Caco-2 (cell line): ENCODE measurements at regions of chr11 and their contacts with region 1.

Region 1: DNA sequence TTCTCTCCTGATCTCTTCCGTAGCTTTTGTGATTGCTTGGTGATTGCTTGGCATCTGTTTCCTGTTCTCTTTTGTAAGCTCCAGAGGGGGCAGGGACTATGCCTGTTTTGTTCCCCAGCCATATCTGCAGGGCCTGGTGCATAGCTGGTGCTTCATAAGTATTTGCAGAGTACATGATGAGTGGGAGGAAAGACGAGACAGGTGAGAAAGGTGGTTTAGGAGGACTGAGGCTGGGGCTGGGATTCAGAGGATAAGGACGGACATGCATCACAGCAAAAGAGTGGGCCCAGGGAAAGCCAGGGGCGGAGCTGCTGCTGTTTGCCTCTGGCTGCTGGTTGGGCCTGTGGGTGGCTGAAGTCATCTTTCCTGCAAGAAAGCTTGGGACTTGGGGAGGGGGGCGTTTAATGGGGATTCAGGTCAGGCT is 62.4 kb downstream of the DSCAML1 start:
- DNase-seq: no peak
- H3K4me3 ChIP-seq: no peak overlapping the region
- H3K4me3 Mint-ChIP-seq: no peak overlapping the region
- H3K27ac Mint-ChIP-seq: no peak overlapping the region
- H3K4me1 ChIP-seq: no peaks in the 10 kb centered on the region
- H3K4me1 Mint-ChIP-seq: peaks cover 4% of the 10 kb centered on the region
- H3K27me3 ChIP-seq: no peaks in the 10 kb centered on the region
- H3K27me3 Mint-ChIP-seq: no peaks in the 10 kb centered on the region
- CTCF ChIP-seq: no peak

Region 2: DNA sequence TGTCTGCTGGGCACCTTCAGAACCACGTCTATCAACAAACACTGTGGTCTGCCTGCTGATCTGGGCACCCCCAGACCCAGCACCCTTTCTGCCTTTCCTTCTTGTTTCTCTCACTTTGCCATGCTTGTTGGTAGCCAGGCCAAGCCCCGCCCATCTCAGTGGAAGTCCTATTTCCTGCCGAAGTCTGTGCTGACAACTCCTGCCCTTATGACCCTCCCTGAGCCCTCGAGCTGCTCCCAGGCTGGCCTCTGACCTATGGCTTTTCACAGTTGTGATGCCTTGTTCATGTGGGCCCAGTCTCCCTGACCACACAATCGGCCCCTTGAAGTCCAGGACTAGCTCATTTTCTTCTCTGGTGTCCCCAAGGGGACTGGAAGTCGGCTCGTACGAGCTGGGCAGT is 69.7 kb before region 1 on chr11:
- CTCF ChIA-PET with region 1: no interaction called
- POLR2A ChIA-PET with region 1: no interaction called
- intact Hi-C with region 1: loop called (anchors 5 kb)
- DNase-seq: peak; percentile 56 to 72
- H3K4me3 ChIP-seq: no peak overlapping the region
- H3K4me3 Mint-ChIP-seq: no peak overlapping the region
- H3K27ac Mint-ChIP-seq: peak overlapping the region; percentile 25
- H3K4me1 ChIP-seq: peaks cover 11% of the 10 kb centered on the region
- H3K4me1 Mint-ChIP-seq: peaks cover 12% of the 10 kb centered on the region
- H3K27me3 ChIP-seq: no peaks in the 10 kb centered on the region
- H3K27me3 Mint-ChIP-seq: no peaks in the 10 kb centered on the region
- CTCF ChIP-seq: no peak

Region 3: DNA sequence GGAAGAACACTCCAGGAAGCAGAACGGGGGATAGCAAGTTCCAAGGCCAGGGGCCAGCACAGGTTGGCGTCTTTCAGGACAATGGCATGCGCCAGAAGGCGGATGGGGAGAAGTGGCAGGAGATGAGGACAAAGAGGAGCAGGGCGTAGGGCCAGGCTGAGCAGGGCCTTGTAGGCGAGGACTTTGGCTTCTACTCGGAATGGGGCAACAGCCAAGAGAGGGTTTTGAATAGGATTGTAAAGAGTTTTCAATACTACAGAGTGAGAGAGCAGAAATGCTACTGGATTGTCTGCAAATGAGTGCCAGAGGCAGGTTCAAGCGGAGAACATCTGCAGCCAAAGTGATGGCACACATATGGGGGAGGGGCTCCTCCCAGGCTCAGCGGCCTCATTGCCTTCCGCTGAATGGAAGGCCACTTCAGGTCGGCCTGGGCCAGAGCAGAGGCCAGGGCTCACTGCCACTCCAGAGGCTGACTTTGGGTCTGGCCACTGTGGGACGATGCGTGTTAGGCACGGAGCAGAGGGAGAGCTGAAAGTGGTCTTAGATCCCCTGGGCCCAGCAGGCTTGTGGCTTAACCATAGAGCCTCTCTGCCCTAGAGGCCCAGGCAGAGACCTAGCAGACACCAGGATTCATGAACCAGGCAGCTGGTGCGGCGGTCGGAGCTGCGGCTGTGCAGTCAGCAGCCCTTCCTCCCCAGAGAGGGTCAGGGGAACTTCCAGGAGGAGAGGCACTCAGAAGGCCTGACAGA is 55.8 kb before region 1 on chr11:
- CTCF ChIA-PET with region 1: no interaction called
- POLR2A ChIA-PET with region 1: no interaction called
- intact Hi-C with region 1: no loop called
- DNase-seq: no peak
- H3K4me3 ChIP-seq: no peak overlapping the region
- H3K4me3 Mint-ChIP-seq: no peak overlapping the region
- H3K27ac Mint-ChIP-seq: no peak overlapping the region
- H3K4me1 ChIP-seq: peaks cover 9% of the 10 kb centered on the region
- H3K4me1 Mint-ChIP-seq: peaks cover 14% of the 10 kb centered on the region
- H3K27me3 ChIP-seq: no peaks in the 10 kb centered on the region
- H3K27me3 Mint-ChIP-seq: no peaks in the 10 kb centered on the region
- CTCF ChIP-seq: no peak